Right ventricle myocardium inferior (tissue), 1 donor: ENCODE measurements at regions of chr9 and their contacts with region 1.

Region 1: DNA sequence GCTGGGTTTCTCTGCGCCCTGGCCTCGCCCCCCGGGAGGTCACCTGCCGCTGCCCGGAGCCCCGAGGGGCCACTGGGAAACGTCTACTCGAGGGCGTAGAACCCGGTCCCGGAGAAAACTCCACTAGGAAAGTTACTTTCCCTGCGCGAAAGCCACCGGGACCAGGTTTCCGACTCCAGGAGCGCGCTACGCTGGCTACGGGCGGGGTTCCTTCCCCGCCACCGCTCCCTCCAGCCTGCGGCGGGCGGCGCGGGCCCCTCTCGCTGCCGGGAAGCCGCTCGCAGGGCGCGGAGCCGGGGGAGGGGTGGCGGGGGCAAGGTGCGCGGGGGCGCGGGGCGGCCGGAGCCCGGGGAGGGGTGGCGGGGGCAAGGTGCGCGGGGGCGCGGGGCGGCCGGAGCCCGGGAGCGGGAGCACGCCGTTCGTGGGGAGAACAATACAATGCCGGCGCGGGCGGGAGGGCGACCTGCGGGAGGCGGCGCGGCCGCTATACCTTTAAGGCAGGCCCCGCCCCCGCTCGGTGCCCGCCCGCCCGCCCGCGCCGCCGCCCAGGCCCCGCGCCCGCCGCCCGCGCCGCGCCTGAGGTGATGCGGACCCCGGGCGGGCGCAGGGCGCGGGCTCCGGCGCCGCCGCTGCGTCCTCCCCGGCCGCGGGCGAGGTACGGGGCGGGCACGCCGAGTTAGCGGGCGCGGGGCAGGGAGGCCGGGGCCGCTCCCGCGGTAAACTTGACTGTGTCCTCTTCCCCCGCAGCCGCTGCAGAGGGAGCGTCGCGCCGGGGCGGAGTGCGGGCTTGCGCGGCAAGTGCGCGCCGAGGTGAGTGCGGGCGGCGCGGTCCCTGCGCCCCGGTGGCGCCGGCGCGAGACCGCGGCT is 278.1 kb downstream of the AOPEP start:
- DNase-seq: peak; percentile 78
- ATAC-seq: peak; percentile 56

Region 2: DNA sequence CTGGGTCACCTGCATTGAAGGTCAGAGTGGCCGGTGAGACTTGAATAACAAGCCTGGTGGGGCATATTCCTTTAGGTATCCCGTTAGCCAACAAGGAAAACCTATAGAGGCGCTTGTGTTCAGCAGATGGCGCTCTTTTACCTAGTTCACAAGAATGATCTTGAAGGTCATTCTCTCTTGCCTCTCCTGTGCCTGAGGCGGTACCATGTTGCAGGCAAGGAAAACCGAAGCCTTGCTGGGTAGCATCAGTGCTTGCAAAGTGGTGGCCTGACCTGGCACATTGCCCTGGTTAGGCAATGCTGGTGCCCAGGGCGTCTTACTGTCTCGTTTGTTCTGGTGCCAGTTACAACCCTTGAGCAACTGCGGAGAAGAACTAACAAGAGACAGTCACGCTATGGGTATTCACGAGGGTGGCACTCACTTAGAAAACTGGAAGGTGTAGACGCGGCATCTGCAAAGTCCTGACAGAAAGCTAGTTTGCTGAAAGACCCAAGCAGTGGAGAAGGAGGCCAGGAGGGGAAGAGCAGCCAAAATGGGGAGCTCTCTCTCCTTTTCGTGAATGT is 221.5 kb before region 1 on chr9:
- intact Hi-C with region 1: loop called (anchors 1 kb)
- DNase-seq: no peak
- ATAC-seq: peak; percentile 79

Region 3: GRCh38 chr9:95048225-95049087 is 43.8 kb after region 1 on chr9:
- intact Hi-C with region 1: loop called (anchors 5 kb)
- DNase-seq: peak; percentile 89
- ATAC-seq: peak; percentile 80

Region 4: GRCh38 chr9:95073021-95073607 is 68.5 kb after region 1 on chr9:
- intact Hi-C with region 1: no loop called
- DNase-seq: no peak
- ATAC-seq: peak; percentile 21

Region 5: GRCh38 chr9:95087659-95088242 is 83.1 kb after region 1 on chr9:
- intact Hi-C with region 1: loop called (anchors 5 kb)
- DNase-seq: no peak
- ATAC-seq: no peak